Activated CD4-positive, alpha-beta T cell treated with anti-CD3 and anti-CD28 coated beads for 36 hours (primary cell): ENCODE measurements at regions of chrX and their contacts with region 1.

Region 1: DNA sequence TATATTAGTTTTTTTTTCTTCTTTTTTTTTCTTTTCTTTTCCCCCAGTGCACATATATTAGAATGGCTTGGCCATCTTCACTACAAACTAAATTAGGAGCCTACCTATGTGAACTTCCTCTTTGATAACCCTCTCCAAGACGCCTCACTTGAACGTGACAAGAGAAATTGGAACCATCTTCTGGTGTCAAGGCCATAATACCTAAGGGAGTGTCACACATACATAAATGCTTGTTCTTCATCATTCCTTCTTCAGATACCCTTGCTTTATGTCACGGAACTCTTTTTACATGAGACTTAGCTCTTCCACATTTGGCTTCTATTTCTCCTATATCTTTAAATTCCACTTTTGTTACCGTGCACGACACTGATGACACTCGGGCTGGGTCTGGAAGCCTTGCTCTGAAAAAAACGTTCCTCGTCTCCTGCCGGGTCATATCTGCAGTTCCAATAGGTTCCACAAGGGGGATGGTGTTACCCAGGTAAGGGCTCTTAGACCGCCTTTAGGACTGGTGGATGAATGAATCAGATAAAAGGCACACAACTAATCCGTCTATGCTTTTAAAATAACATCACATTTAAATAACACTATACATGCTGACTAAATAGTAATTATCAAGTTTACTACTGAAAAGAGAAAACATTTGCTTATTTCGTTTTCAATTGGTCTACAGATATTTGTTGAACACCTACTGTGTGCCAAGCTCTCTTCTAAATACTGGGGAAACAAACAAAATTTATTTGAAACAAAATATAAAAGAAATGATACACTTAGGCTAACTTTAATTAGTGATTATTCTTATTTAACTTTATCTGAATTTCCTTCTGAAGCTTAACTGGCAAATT is 19.9 kb downstream of the DGAT2L6 start:
- DNase-seq: peak; percentile 78
- ATAC-seq: peak; percentile 86
- H3K4me3 Mint-ChIP-seq: no peak overlapping the region
- H3K27ac Mint-ChIP-seq: no peak overlapping the region
- H3K4me1 Mint-ChIP-seq: peaks cover 2% of the 10 kb centered on the region
- H3K27me3 Mint-ChIP-seq: peaks cover 2% of the 10 kb centered on the region

Region 2: GRCh38 chrX:70262952-70263567 is 65.9 kb after region 1 on chrX:
- CTCF ChIA-PET with region 1: interaction called, 7 read pairs
- POLR2A ChIA-PET with region 1: no interaction called
- intact Hi-C with region 1: loop called (anchors 1 to 2 kb)
- DNase-seq: peak; percentile 71
- ATAC-seq: peak; percentile 83
- H3K4me3 Mint-ChIP-seq: no peak overlapping the region
- H3K27ac Mint-ChIP-seq: no peak overlapping the region
- H3K4me1 Mint-ChIP-seq: no peaks in the 10 kb centered on the region
- H3K27me3 Mint-ChIP-seq: no peaks in the 10 kb centered on the region

Region 3: DNA sequence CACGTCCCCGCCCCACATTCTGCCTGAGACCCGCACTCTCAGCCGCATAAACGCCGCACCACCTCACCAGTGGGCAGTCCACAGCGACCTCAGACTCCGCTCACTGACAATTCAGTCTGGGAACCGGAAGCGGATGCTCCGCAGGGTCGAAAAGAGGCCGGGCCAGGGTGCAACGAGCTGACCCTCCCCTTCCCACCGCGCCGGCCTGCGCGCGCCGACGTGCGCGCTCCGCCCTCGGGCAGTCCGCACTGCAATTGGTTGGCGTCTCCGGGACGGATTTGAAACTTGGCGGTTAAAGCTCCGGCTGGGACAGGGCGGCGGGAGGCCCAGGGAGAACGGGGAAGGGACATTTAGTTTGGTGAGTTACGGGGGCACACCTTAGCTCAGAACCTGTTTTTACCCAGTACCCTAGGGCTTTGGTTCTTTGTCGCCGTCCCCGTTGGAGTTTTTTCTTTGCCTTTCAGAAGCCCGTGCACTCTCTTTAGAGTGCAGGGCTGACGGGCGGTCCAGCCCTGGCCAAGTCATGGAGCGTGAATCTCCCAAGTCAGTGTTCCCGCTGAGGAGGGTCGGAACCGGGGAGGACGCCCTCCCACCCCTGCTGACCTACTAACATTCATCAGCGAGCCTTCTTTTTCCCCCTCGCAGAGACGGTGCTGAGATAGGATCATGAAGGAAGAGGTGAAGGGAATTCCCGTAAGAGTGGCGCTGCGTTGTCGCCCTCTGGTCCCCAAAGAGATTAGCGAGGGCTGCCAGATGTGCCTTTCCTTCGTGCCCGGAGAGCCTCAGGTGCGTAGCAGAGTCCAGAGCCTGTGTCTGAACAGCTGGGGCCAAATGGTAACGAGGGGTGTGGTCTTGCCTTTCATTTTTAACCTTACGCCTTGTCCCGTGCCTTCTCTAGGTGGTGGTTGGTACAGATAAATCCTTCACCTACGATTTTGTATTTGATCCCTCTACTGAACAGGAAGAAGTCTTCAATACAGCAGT is 92.9 kb after region 1 on chrX and contains the starts of genes KIF4A and PDZD11:
- CTCF ChIA-PET with region 1: interaction called, 3 read pairs
- POLR2A ChIA-PET with region 1: no interaction called
- intact Hi-C with region 1: loop called in 1 of 2 experiments (anchors 1 kb)
- DNase-seq: peak; percentile 89
- ATAC-seq: peak; percentile 100
- H3K4me3 Mint-ChIP-seq: peak within 1 kb of the TSS; percentile 88
- H3K27ac Mint-ChIP-seq: peak within 1 kb of the TSS; percentile 82
- H3K4me1 Mint-ChIP-seq: peaks cover 18% of the 10 kb centered on the region
- H3K27me3 Mint-ChIP-seq: no peaks in the 10 kb centered on the region
- total RNA-seq, gene KIF4A: 21.2 to 25.4 TPM
- total RNA-seq, gene PDZD11: 23.6 to 28.0 TPM

Region 4: GRCh38 chrX:70433848-70434351 is 236.7 kb after region 1 on chrX:
- CTCF ChIA-PET with region 1: interaction called, 5 read pairs
- POLR2A ChIA-PET with region 1: no interaction called
- intact Hi-C with region 1: loop called in 1 of 2 experiments (anchors 1 kb)
- DNase-seq: peak; percentile 86
- ATAC-seq: peak; percentile 80
- H3K4me3 Mint-ChIP-seq: peak overlapping the region; percentile 85
- H3K27ac Mint-ChIP-seq: peak overlapping the region; percentile 89
- H3K4me1 Mint-ChIP-seq: peaks cover 11% of the 10 kb centered on the region
- H3K27me3 Mint-ChIP-seq: peaks cover 14% of the 10 kb centered on the region

Region 5: GRCh38 chrX:70664726-70665125 is 467.5 kb after region 1 on chrX:
- CTCF ChIA-PET with region 1: no interaction called
- POLR2A ChIA-PET with region 1: no interaction called
- intact Hi-C with region 1: loop called in 1 of 2 experiments (anchors 10 kb)
- DNase-seq: peak; percentile 9
- ATAC-seq: peak; percentile 81
- H3K4me3 Mint-ChIP-seq: no peak overlapping the region
- H3K27ac Mint-ChIP-seq: no peak overlapping the region
- H3K4me1 Mint-ChIP-seq: no peaks in the 10 kb centered on the region
- H3K27me3 Mint-ChIP-seq: peaks cover 2% of the 10 kb centered on the region